ENCODE measurements at regions of chr4 and their contacts with region 1.

Region 1: GRCh38 chr4:186587416-186588018 is 32.1 kb upstream of the MTNR1A start:
- DNase-seq: peak; percentile 58
- H3K4me3 ChIP-seq: no peak overlapping the region
- H3K27ac ChIP-seq: no peak overlapping the region
- H3K4me1 ChIP-seq: no peaks in the 10 kb centered on the region
- H3K27me3 ChIP-seq: no peaks in the 10 kb centered on the region
- CTCF ChIP-seq: peak; percentile 94

Region 2: DNA sequence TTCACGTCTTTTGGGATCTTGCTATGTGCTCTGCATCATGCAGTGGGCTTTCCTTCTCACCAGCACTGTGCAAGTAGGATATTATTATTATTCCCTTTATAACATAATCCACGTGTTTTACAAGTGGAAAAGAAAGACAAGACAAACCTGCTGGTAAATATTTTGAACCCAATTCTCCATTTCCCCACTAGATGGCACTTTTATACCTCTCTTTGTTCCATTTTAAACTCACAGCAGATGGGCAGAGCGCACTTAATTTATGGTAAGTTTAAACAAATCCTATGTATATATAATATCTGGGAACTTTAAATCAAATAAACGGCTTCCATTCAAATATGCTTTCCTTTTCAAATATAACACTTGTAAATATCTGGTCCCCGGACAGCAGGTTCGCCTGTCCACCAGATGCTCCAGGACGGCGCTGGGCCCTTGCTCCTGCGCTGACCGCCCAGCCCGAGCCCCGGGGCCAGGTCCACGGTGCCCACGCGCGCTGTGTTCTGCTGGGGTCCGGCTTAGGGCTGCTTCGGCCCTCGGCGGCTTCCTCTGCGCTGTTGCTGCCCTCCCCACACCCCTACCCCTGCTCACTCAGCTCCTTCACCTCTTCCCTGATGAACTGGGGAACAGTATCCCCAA is 290.4 kb before region 1 on chr4:
- CTCF ChIA-PET with region 1: interaction called, 3 read pairs
- POLR2A ChIA-PET with region 1: no interaction called
- intact Hi-C with region 1: loop called (anchors 1 kb)
- DNase-seq: peak; percentile 79
- H3K4me3 ChIP-seq: no peak overlapping the region
- H3K27ac ChIP-seq: no peak overlapping the region
- H3K4me1 ChIP-seq: no peaks in the 10 kb centered on the region
- H3K27me3 ChIP-seq: no peaks in the 10 kb centered on the region
- CTCF ChIP-seq: peak; percentile 74

Region 3: DNA sequence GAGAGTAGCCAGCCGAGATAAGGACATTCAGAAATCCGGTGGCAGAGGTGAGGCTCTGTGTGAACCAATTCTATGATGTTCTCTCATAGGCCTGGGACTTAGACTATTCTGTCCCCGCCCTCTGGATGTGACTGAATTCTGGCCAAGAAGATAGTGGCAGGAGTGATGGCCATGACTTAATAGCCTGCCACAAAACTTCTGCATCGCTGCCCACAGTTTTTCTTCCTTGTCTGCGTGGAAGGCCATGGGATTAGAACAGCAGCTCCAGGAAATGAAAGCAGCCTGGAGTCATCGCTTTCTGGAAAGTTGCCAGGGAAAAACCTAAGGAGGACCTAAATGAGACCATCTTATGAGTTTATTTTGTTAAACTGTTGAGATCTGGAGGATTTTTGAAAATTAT is 186.8 kb before region 1 on chr4:
- CTCF ChIA-PET with region 1: no interaction called
- POLR2A ChIA-PET with region 1: no interaction called
- intact Hi-C with region 1: no loop called
- DNase-seq: peak; percentile 54
- H3K4me3 ChIP-seq: no peak overlapping the region
- H3K27ac ChIP-seq: no peak overlapping the region
- H3K4me1 ChIP-seq: no peaks in the 10 kb centered on the region
- H3K27me3 ChIP-seq: no peaks in the 10 kb centered on the region
- CTCF ChIP-seq: no peak

Region 4: DNA sequence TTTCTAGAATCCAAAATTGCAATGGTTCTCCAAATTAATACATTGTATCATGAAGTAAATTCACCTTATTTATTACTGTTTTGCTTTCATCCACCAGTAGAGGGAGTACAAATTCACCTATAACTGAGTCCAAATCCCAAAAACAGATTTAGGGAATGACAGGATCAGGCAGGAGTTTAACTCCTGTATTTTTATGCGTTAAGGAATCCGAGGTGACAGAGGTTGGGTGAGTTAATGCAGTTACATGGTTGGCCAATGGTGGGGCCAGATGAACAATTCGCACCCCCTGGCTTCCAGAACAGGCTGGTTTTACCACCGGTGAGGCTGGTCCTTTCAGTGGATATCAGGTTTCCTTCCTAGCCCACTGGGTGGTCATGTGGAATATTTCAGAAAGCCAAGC is 114.6 kb before region 1 on chr4:
- CTCF ChIA-PET with region 1: no interaction called
- POLR2A ChIA-PET with region 1: no interaction called
- intact Hi-C with region 1: loop called (anchors 2 kb)
- DNase-seq: peak; percentile 58
- H3K4me3 ChIP-seq: no peak overlapping the region
- H3K27ac ChIP-seq: no peak overlapping the region
- H3K4me1 ChIP-seq: no peaks in the 10 kb centered on the region
- H3K27me3 ChIP-seq: no peaks in the 10 kb centered on the region
- CTCF ChIP-seq: peak; percentile 85

Measured in A673 (cell line).